Activated CD8-positive, alpha-beta T cell treated with anti-CD3 and anti-CD28 coated beads for 36 hours (primary cell): ENCODE measurements at regions of chr3 and their contacts with region 1.

Region 1: DNA sequence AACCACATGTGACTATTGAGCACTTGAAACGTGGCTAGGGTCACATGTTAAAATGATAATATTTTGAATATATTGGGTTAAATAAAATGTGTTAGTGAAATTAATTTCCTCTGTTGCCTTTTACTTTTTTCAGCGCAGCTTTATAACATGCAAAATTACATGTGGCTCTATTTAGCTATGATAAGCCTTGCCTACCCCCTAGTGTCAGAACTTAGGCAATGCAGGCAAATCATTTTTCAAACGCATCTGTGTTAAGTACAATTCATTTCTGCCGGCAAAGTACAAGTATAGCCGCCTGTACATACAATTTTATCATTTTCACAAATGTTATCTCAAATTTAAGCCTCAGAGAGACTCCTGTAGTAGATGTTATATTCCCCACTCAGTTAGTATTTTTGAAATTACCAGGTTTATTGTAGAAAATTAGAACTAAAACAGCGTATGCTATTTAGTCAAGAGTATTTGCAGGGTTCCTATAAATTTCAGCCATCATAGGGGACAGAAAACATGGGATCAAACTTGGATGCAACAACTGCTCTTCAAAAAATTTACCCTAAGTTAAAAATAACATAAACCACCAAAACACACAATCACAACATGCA is 56.1 kb downstream of the TAFA4 start:
- DNase-seq: peak; percentile 44
- ATAC-seq: peak; percentile 76
- H3K4me3 Mint-ChIP-seq: no peak overlapping the region
- H3K27ac Mint-ChIP-seq: no peak overlapping the region
- H3K4me1 Mint-ChIP-seq: no peaks in the 10 kb centered on the region
- H3K27me3 Mint-ChIP-seq: peaks cover 5% of the 10 kb centered on the region
- CTCF ChIP-seq: peak; percentile 92

Region 2: GRCh38 chr3:68751888-68752287 is 124.3 kb before region 1 on chr3:
- CTCF ChIA-PET with region 1: no interaction called
- POLR2A ChIA-PET with region 1: no interaction called
- intact Hi-C with region 1: no loop called
- DNase-seq: no peak
- ATAC-seq: peak; percentile 53
- H3K4me3 Mint-ChIP-seq: no peak overlapping the region
- H3K27ac Mint-ChIP-seq: no peak overlapping the region
- H3K4me1 Mint-ChIP-seq: peaks cover 9% of the 10 kb centered on the region
- H3K27me3 Mint-ChIP-seq: peaks cover 7% of the 10 kb centered on the region
- CTCF ChIP-seq: no peak

Region 3: DNA sequence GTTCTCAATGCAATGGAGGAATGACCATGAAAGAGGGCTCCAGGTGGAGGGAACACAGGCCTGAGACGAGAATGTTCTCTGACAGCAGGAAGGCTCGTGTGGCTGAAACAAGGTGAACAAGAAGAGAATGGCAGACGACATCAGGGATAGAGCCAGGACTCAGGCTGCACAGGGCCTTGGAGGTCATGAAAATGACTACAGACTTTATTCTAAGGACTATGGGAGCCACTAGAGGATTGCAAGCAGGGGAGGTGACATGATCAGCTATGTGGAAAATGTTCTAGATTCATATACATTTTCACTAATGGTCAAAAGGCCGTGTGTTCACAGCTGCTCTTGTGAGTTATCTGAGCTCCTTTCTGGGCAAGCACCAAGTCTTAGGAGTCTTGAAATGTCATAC is 22.0 kb before region 1 on chr3:
- CTCF ChIA-PET with region 1: no interaction called
- POLR2A ChIA-PET with region 1: no interaction called
- intact Hi-C with region 1: no loop called
- DNase-seq: no peak
- ATAC-seq: no peak
- H3K4me3 Mint-ChIP-seq: no peak overlapping the region
- H3K27ac Mint-ChIP-seq: no peak overlapping the region
- H3K4me1 Mint-ChIP-seq: no peaks in the 10 kb centered on the region
- H3K27me3 Mint-ChIP-seq: peaks cover 7% of the 10 kb centered on the region
- CTCF ChIP-seq: no peak

Region 4: DNA sequence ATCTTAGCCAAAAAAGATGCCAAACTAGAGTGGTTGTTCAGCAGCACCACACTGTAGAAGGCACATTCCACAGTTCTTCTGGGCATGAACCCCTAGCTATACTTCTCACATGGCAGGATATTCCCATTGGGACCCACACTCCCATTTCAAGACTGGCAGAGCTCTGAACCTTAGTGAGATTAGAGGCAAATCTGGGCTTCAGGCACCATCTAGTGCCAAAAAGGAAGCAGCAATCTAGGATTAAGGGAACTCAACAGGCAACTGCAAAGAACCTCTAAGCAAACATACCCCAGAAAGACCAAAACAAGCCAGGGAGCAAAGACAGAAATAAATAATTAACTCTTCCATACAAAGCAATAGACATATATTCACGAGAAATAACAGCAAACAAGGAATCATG is 10.1 kb before region 1 on chr3:
- CTCF ChIA-PET with region 1: interaction called, 14 read pairs
- POLR2A ChIA-PET with region 1: no interaction called
- intact Hi-C with region 1: no loop called
- DNase-seq: no peak
- ATAC-seq: no peak
- H3K4me3 Mint-ChIP-seq: no peak overlapping the region
- H3K27ac Mint-ChIP-seq: no peak overlapping the region
- H3K4me1 Mint-ChIP-seq: no peaks in the 10 kb centered on the region
- H3K27me3 Mint-ChIP-seq: peaks cover 25% of the 10 kb centered on the region
- CTCF ChIP-seq: no peak